Naive thymus-derived CD4-positive, alpha-beta T cell (primary cell): ENCODE measurements at regions of chr2 and their contacts with region 1.

Region 1: GRCh38 chr2:205034034-205034433 is 488.8 kb downstream of the PARD3B start:
- DNase-seq: peak in 6 of 9 donors; percentile 29 to 45 (median 33)
- ATAC-seq: peak; percentile 32
- H3K4me3 ChIP-seq: no peak overlapping the region
- H3K4me3 Mint-ChIP-seq: peak overlapping the region in 9 of 10 donors; percentile 11 to 70 (median 41)
- H3K27ac ChIP-seq: no peak overlapping the region
- H3K27ac Mint-ChIP-seq: peak overlapping the region in 8 of 9 donors; percentile 4 to 86 (median 64)
- H3K4me1 ChIP-seq: peaks cover 0 to 20% of the 10 kb centered on the region in 2 donors
- H3K4me1 Mint-ChIP-seq: peaks cover 14 to 54% (median 45%) of the 10 kb centered on the region in 7 donors
- H3K27me3 ChIP-seq: no peaks in the 10 kb centered on the region
- H3K27me3 Mint-ChIP-seq: peaks cover 0 to 5% (median 0%) of the 10 kb centered on the region in 5 donors

Region 2: DNA sequence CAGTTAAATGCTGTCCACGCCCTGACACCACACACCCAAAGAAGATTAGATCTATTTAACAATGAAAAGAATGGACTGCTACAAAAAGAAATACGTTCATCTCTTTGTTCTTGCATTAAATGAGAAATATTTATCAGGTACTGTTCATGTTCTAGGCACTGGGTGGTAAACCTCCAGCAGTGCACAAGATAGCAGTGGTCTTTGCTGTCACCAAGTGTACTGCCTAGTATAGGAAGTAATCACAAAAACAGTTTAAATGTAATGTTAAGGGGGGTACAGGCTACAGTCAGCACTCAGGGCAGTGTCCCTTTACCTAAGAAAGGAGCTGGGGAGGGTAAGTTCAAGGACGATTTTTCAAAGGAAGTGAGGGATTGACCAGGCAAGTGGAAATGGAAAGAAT is 45.2 kb before region 1 on chr2:
- CTCF ChIA-PET with region 1: no interaction called
- POLR2A ChIA-PET with region 1: no interaction called
- intact Hi-C with region 1: loop called in 1 of 2 experiments (anchors 5 kb)
- DNase-seq: no peak
- ATAC-seq: no peak
- H3K4me3 ChIP-seq: no peak overlapping the region
- H3K4me3 Mint-ChIP-seq: no peak overlapping the region
- H3K27ac ChIP-seq: no peak overlapping the region
- H3K27ac Mint-ChIP-seq: peak overlapping the region in 2 of 9 donors; percentile 15 to 17
- H3K4me1 ChIP-seq: no peaks in the 10 kb centered on the region
- H3K4me1 Mint-ChIP-seq: peaks cover 0 to 20% (median 6%) of the 10 kb centered on the region in 7 donors
- H3K27me3 ChIP-seq: no peaks in the 10 kb centered on the region
- H3K27me3 Mint-ChIP-seq: peaks cover 0 to 3% (median 0%) of the 10 kb centered on the region in 5 donors

Region 3: DNA sequence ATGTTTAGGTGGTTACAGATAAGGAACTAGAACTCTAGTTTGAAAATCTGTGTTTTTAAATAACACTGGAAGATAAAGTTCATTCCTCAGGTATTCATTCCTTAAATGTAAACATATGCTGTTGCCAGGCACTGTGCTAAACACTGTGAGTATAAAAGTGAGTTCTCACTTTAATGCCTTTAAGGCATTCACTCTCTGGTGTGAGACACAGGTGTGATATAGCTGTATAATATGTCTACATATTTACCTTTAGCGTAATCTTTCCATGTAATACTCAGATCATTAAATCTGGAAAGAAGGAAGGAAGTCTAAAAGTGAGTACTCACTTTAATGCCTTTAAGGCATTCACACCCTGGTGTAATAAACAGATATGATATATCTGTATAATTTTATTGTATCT is 16.1 kb before region 1 on chr2:
- CTCF ChIA-PET with region 1: interaction called, 3 read pairs
- POLR2A ChIA-PET with region 1: no interaction called
- intact Hi-C with region 1: loop called in 1 of 2 experiments (anchors 2 kb)
- DNase-seq: no peak
- ATAC-seq: no peak
- H3K4me3 ChIP-seq: no peak overlapping the region
- H3K4me3 Mint-ChIP-seq: no peak overlapping the region
- H3K27ac ChIP-seq: no peak overlapping the region
- H3K27ac Mint-ChIP-seq: peak overlapping the region in 3 of 9 donors; percentile 3 to 9 (median 4)
- H3K4me1 ChIP-seq: no peaks in the 10 kb centered on the region
- H3K4me1 Mint-ChIP-seq: peaks cover 5 to 11% (median 6%) of the 10 kb centered on the region in 7 donors
- H3K27me3 ChIP-seq: no peaks in the 10 kb centered on the region
- H3K27me3 Mint-ChIP-seq: no peaks in the 10 kb centered on the region